HCT116 (cell line): ENCODE measurements at regions of chr4 and their contacts with region 1.

Region 1: GRCh38 chr4:175253184-175253902 is 335.2 kb downstream of the ADAM29 start:
- DNase-seq: peak; percentile 19
- ATAC-seq: peak; percentile 74
- H3K4me3 ChIP-seq: no peak overlapping the region
- H3K27ac ChIP-seq: no peak overlapping the region
- H3K4me1 ChIP-seq: no peaks in the 10 kb centered on the region
- H3K27me3 ChIP-seq: no peaks in the 10 kb centered on the region
- CTCF ChIP-seq: peak; percentile 43 to 66 (median 46); a peak in 5 of 6 replicates
- POLR2A ChIP-seq: no peak
- RAD21 ChIP-seq: peak; percentile 71

Region 2: GRCh38 chr4:174553828-174554227 is 699.5 kb before region 1 on chr4:
- CTCF ChIA-PET with region 1: no interaction called
- POLR2A ChIA-PET with region 1: no interaction called
- RAD21 ChIA-PET with region 1: no interaction called
- intact Hi-C with region 1: no loop called
- DNase-seq: no peak
- ATAC-seq: no peak
- H3K4me3 ChIP-seq: no peak overlapping the region
- H3K27ac ChIP-seq: no peak overlapping the region
- H3K4me1 ChIP-seq: no peaks in the 10 kb centered on the region
- H3K27me3 ChIP-seq: no peaks in the 10 kb centered on the region
- CTCF ChIP-seq: no peak
- POLR2A ChIP-seq: no peak
- RAD21 ChIP-seq: no peak

Region 3: DNA sequence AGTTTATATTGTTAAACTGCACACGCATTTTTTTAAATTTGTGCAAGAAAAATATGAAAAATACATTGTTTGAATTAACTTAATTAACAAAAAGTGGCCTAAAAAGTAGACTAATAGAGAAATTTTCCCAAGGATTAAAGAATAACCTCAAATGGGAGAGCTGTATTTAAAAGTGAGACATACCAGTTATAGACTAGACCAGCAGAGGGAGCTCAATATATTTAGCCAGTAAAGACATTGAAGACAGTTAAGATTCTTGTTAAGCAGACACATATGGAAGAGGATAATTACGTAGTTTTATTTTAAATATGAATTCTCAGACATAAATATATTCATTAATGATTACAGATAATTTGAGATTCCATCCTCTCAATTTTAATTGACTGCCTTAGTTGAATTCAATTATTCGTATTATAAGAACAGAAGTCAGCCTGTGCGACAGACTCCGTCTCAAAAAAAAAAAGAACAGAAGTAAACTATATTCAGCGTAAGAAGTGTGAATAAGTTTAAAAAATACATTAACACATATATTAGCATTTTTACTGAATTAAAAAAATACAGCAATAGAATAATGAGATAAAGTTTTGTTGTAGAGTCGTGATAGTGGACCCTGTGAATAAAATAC is 489.1 kb before region 1 on chr4:
- CTCF ChIA-PET with region 1: interaction called, 5 read pairs
- POLR2A ChIA-PET with region 1: no interaction called
- RAD21 ChIA-PET with region 1: no interaction called
- intact Hi-C with region 1: loop called (anchors 2 kb)
- DNase-seq: peak; percentile 40
- ATAC-seq: peak; percentile 85
- H3K4me3 ChIP-seq: no peak overlapping the region
- H3K27ac ChIP-seq: no peak overlapping the region
- H3K4me1 ChIP-seq: no peaks in the 10 kb centered on the region
- H3K27me3 ChIP-seq: no peaks in the 10 kb centered on the region
- CTCF ChIP-seq: peak; percentile 55 to 77 (median 55)
- POLR2A ChIP-seq: no peak
- RAD21 ChIP-seq: peak; percentile 61

Region 4: DNA sequence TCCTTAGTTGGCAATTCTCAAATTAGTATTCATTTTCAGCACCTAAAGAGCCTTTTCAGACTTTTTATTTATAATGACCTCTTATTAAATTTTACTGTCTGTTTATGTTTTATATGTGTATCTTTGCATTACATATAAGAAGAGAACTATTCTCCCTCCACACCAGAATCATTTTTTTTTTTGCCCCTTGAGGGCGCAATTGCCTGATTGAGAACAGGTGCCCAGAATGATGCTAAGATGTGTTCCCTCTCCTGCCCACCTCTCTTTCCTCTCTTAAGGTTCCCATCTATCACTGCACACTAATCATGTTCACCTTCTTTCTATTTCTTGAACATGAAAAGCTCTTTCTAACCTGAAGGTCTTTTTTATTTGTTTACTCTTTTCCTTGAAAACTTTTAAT is 379.4 kb before region 1 on chr4:
- CTCF ChIA-PET with region 1: no interaction called
- POLR2A ChIA-PET with region 1: no interaction called
- RAD21 ChIA-PET with region 1: no interaction called
- intact Hi-C with region 1: loop called (anchors 1 kb)
- DNase-seq: peak; percentile 4
- ATAC-seq: peak; percentile 64
- H3K4me3 ChIP-seq: no peak overlapping the region
- H3K27ac ChIP-seq: no peak overlapping the region
- H3K4me1 ChIP-seq: no peaks in the 10 kb centered on the region
- H3K27me3 ChIP-seq: no peaks in the 10 kb centered on the region
- CTCF ChIP-seq: peak; percentile 43 to 61 (median 46); a peak in 5 of 6 replicates
- POLR2A ChIP-seq: no peak
- RAD21 ChIP-seq: peak; percentile 60